K562 (cell line): ENCODE measurements at regions of chr1 and their contacts with region 1.

Region 1: GRCh38 chr1:25442178-25442577 is 11.5 kb downstream of the MACO1 start:
- DNase-seq: no peak
- ATAC-seq: peak; percentile 39
- H3K4me3 ChIP-seq: no peak overlapping the region
- H3K27ac ChIP-seq: no peak overlapping the region
- H3K4me1 ChIP-seq: peaks cover 3 to 18% of the 10 kb centered on the region in 2 experiments; a peak in 3 of 5 replicates
- H3K27me3 ChIP-seq: no peaks in the 10 kb centered on the region
- CTCF ChIP-seq: peak in 1 of 3 experiments; percentile 28; a peak in 2 of 6 replicates
- EP300 ChIP-seq: no peak
- POLR2A ChIP-seq: no peak
- RAD21 ChIP-seq: peak; percentile 17 to 48; a peak in 3 of 4 replicates

Region 2: GRCh38 chr1:25520446-25521061 is 78.4 kb after region 1 on chr1:
- CTCF ChIA-PET with region 1: interaction called, 11 read pairs
- POLR2A ChIA-PET with region 1: interaction called, 3 read pairs
- in situ Hi-C with region 1: no loop called
- intact Hi-C with region 1: no loop called
- DNase-seq: peak; percentile 67 to 81 (median 68)
- ATAC-seq: peak; percentile 47; the same call in 2 of the 3 replicates
- H3K4me3 ChIP-seq: no peak overlapping the region
- H3K27ac ChIP-seq: no peak overlapping the region
- H3K4me1 ChIP-seq: peaks cover 7 to 10% of the 10 kb centered on the region in 2 experiments; a peak in 4 of 5 replicates
- H3K27me3 ChIP-seq: peaks cover 2 to 13% of the 10 kb centered on the region in 2 experiments; a peak in 3 of 5 replicates
- CTCF ChIP-seq: peak; percentile 76 to 87 (median 85)
- EP300 ChIP-seq: no peak
- POLR2A ChIP-seq: no peak
- RAD21 ChIP-seq: peak; percentile 85 to 89

Region 3: DNA sequence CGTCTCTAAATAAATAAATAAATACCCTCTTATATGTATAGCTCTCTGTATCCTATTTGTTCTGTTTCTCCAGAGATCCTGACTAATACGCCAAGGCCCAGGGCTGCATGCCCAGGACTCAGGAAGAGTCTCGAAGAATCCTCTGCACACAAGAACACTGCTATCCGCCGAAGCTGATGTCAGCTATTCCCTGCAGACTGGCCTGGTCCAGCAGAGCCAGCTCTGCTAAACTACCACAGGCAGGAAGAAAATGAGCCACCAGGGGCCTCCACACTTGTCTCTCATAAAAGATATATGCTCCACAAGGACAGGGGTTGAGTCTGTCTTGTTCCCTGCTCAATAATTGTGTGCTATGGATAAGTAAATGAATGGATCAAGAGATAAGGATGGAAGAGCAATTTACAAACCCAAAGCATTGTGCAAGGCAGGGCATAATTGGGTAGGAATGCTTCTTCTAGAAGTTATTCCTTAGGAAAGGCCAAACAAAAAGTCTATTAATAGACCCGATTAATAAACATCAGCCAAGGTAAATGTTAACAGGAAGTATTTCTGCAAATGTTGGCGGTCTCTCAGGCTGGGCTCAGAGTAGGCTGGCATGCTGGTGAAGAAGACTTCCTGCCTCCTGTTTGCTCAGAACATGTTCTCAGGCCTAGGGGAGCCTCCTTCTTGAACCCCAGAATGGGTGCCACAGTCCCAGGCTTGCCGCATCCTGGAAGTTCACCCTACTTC is 148.1 kb after region 1 on chr1:
- CTCF ChIA-PET with region 1: no interaction called
- POLR2A ChIA-PET with region 1: no interaction called
- in situ Hi-C with region 1: no loop called
- intact Hi-C with region 1: no loop called
- DNase-seq: no peak
- ATAC-seq: peak; percentile 52
- H3K4me3 ChIP-seq: no peak overlapping the region
- H3K27ac ChIP-seq: no peak overlapping the region
- H3K4me1 ChIP-seq: peaks cover 0 to 9% of the 10 kb centered on the region in 2 experiments; a peak in 2 of 5 replicates
- H3K27me3 ChIP-seq: peaks cover 17 to 58% of the 10 kb centered on the region in 2 experiments; a peak in 4 of 5 replicates
- CTCF ChIP-seq: peak in 1 of 3 experiments; percentile 32; a peak in 1 of 6 replicates
- EP300 ChIP-seq: no peak
- POLR2A ChIP-seq: no peak
- RAD21 ChIP-seq: no peak